ENCODE measurements at regions of chr7 and their contacts with region 1.

Region 1: DNA sequence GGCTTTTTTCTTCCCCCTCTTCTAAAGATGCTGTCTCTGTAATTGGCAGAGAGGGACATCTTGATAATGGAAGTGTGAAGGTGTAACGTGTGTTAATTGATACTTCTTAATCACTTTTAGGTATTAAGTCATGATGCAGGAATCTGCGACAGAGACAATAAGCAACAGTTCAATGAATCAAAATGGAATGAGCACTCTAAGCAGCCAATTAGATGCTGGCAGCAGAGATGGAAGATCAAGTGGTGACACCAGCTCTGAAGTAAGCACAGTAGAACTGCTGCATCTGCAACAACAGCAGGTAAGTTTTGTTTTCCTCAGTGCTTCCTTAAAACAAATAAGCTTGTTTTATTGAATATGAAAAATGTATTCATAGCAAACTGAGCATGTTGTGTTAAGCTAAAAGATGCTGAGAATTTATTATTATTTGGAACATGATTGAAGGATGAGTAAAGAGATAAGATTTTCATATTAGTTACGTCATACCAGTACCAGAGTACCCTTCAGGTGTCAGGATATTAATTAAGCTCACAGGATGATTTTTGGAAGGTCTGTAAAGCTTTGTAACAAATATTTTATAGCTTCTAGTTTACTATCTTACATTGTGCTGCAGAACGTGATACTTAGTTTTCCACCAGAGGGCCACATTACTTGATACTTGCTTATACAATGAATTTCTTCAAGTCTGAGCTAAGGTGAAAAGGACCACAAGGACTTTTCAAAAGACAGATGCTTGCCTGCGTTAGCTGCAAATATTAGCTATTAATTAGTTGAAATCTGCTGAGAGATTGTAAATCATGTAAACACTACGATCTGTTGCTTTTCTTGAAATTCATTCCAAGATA is 12.0 kb downstream of the FOXP2 start:
- DNase-seq: no peak
- H3K4me3 ChIP-seq: no peak overlapping the region
- H3K27me3 ChIP-seq: no peaks in the 10 kb centered on the region
- CTCF ChIP-seq: peak; percentile 45

Region 2: DNA sequence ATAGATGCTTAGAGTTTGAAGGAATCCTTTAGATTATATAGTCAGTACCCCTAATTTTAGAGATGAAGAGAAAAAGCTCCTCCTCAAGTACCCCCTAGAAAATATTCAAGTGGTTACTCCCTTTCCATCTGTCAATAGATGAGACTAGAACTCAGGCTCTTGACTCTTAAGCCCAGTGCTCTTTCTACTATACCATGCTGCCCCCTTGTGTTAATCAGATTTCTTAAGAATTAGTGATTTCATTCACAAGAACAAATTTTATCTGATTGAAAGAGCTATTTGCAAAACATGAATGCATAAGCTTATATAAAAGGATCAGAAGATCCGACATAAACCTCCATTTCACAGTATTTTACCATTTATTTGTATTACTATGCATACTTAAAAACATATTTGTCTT is 1424.7 kb after region 1 on chr7:
- CTCF ChIA-PET with region 1: interaction called, 13 read pairs
- POLR2A ChIA-PET with region 1: no interaction called
- DNase-seq: peak; percentile 19
- H3K4me3 ChIP-seq: no peak overlapping the region
- H3K27me3 ChIP-seq: no peaks in the 10 kb centered on the region
- CTCF ChIP-seq: peak; percentile 45

Measured in BJ (cell line).